K562 (cell line): ENCODE measurements at regions of chr4 and their contacts with region 1.

Region 1: DNA sequence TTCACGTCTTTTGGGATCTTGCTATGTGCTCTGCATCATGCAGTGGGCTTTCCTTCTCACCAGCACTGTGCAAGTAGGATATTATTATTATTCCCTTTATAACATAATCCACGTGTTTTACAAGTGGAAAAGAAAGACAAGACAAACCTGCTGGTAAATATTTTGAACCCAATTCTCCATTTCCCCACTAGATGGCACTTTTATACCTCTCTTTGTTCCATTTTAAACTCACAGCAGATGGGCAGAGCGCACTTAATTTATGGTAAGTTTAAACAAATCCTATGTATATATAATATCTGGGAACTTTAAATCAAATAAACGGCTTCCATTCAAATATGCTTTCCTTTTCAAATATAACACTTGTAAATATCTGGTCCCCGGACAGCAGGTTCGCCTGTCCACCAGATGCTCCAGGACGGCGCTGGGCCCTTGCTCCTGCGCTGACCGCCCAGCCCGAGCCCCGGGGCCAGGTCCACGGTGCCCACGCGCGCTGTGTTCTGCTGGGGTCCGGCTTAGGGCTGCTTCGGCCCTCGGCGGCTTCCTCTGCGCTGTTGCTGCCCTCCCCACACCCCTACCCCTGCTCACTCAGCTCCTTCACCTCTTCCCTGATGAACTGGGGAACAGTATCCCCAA is 31.1 kb downstream of the F11 start:
- DNase-seq: peak; percentile 26 to 53 (median 34)
- ATAC-seq: peak; percentile 76
- H3K4me3 ChIP-seq: no peak overlapping the region
- H3K27ac ChIP-seq: no peak overlapping the region
- H3K4me1 ChIP-seq: peaks cover 0 to 10% of the 10 kb centered on the region in 2 experiments; a peak in 1 of 5 replicates
- H3K27me3 ChIP-seq: peaks cover 18 to 45% of the 10 kb centered on the region in 2 experiments
- CTCF ChIP-seq: peak; percentile 49 to 73 (median 54); a peak in 4 of 6 replicates
- EP300 ChIP-seq: no peak
- POLR2A ChIP-seq: no peak
- RAD21 ChIP-seq: peak; percentile 76 to 79

Region 2: DNA sequence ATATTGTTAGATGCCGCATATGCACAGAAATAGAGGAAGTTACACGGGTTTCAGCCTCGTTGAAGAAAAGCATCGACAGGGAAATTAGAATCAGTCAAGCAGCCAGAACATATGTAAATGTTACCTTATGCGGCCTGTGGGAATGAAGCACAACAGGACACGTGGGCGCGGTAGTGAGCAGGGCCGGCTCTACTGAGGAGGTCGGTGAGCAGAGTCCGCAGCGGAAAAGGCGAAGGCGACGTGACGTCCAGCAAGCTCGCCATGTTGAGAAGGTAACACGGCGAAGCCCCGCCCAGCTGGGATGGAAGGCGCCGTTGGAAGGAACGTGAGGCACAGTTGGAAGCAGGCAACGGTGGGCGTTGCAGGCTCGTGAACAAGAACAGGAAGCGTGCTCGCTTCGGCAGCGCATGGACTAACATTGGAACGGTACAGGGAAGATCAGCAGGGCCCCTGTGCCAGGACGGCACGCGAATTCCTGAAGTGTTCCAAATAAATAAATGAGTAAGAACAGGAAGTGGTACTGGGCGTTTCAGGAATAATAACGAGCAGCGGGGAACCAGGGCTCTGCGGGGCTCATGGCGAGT is 203.7 kb after region 1 on chr4:
- CTCF ChIA-PET with region 1: no interaction called
- POLR2A ChIA-PET with region 1: no interaction called
- in situ Hi-C with region 1: no loop called
- intact Hi-C with region 1: no loop called
- DNase-seq: peak; percentile 82 to 96 (median 84)
- ATAC-seq: peak; percentile 96
- H3K4me3 ChIP-seq: peak overlapping the region; percentile 36
- H3K27ac ChIP-seq: peak overlapping the region; percentile 87
- H3K4me1 ChIP-seq: peaks cover 6 to 8% of the 10 kb centered on the region in 2 experiments; a peak in 4 of 5 replicates
- H3K27me3 ChIP-seq: 0 out of 5 replicates have a peak, but pooled peaks cover 0 to under 1% of the 10 kb centered on the region in 2 experiments
- CTCF ChIP-seq: peak in 1 of 3 experiments; percentile 36; a peak in 2 of 6 replicates
- EP300 ChIP-seq: no peak
- POLR2A ChIP-seq: peak; percentile 94
- RAD21 ChIP-seq: no peak

Region 3: DNA sequence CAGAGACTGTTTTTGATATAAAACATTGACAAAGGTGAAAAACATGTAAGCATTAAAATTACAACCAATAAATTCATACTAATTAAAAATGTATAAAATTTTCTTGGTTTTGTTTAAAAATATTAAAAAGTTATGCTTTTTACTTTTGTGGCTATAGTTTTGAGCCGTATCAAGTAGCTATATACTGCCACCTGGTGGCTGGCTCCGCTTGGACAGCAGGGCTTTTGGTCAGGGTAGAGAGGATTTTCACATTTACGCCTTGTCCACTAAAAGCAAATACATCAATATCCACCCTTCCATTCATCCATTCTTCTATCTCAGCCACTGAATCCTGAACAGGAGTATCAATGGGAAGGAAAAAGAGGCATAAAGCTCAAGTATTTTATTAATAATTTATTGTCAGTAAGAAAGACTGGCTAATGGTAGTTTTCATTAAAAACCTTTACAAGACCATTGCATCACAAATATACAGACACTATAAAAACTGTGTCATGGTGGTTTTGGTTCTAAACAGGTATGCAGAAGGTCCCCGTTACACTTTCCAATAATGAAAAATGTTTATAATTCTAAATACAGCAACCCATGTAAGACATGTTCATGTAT is 290.4 kb after region 1 on chr4:
- CTCF ChIA-PET with region 1: interaction called, 22 read pairs
- POLR2A ChIA-PET with region 1: no interaction called
- in situ Hi-C with region 1: loop called (anchors 10 kb)
- intact Hi-C with region 1: loop called (anchors 1 kb)
- DNase-seq: peak; percentile 61 to 79 (median 64)
- ATAC-seq: peak; percentile 91
- H3K4me3 ChIP-seq: no peak overlapping the region
- H3K27ac ChIP-seq: no peak overlapping the region
- H3K4me1 ChIP-seq: no peaks in the 10 kb centered on the region
- H3K27me3 ChIP-seq: no peaks in the 10 kb centered on the region
- CTCF ChIP-seq: peak; percentile 72 to 83 (median 74)
- EP300 ChIP-seq: no peak
- POLR2A ChIP-seq: no peak
- RAD21 ChIP-seq: peak; percentile 79 to 85

Region 4: DNA sequence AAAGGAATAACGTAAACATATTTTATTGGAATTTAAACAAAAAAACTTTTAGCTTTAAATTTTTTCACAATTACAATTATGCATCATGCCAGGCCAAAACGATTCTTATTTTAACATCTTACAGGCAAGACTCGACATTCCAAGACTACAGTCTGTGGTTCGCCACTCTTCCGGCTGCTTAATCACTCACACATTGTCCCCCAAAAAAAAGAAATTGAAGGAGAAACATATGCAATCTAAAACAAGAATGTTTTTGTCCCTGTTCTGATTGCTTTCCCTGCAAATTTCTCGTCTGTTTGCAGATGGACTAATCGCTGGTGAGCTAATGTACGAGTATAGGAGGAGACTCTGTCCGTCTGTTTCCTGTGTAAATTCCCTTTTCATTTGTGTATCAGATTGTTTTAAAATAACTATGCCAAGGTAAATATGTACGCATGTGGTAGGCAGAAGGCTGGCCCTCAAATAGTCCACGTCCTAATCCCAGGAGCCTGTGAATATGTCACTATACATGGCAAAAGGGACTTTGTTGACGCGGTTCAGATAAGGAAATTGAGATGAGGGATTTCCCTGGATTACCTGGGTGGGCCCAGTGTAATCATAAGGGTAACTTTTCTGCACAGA is 295.9 kb after region 1 on chr4:
- CTCF ChIA-PET with region 1: interaction called, 22 read pairs
- POLR2A ChIA-PET with region 1: no interaction called
- in situ Hi-C with region 1: loop called (anchors 10 kb)
- intact Hi-C with region 1: no loop called
- DNase-seq: no peak
- ATAC-seq: no peak
- H3K4me3 ChIP-seq: no peak overlapping the region
- H3K27ac ChIP-seq: no peak overlapping the region
- H3K4me1 ChIP-seq: no peaks in the 10 kb centered on the region
- H3K27me3 ChIP-seq: no peaks in the 10 kb centered on the region
- CTCF ChIP-seq: no peak
- EP300 ChIP-seq: no peak
- POLR2A ChIP-seq: no peak
- RAD21 ChIP-seq: no peak

Region 5: GRCh38 chr4:186719925-186720694 is 423.0 kb after region 1 on chr4:
- CTCF ChIA-PET with region 1: no interaction called
- POLR2A ChIA-PET with region 1: no interaction called
- in situ Hi-C with region 1: no loop called
- intact Hi-C with region 1: loop called (anchors 1 kb)
- DNase-seq: peak; percentile 35 to 73 (median 42)
- ATAC-seq: no peak
- H3K4me3 ChIP-seq: no peak overlapping the region
- H3K27ac ChIP-seq: no peak overlapping the region
- H3K4me1 ChIP-seq: peaks cover 5 to 21% of the 10 kb centered on the region in 2 experiments; a peak in 4 of 5 replicates
- H3K27me3 ChIP-seq: peaks cover 4 to 10% of the 10 kb centered on the region in 2 experiments; a peak in 4 of 5 replicates
- CTCF ChIP-seq: peak; percentile 34 to 60 (median 56); a peak in 4 of 6 replicates
- EP300 ChIP-seq: no peak
- POLR2A ChIP-seq: no peak
- RAD21 ChIP-seq: peak; percentile 33 to 69; a peak in 3 of 4 replicates